Psoas muscle (tissue), 8 donors: ENCODE measurements at regions of chr6 and their contacts with region 1.

Region 1: DNA sequence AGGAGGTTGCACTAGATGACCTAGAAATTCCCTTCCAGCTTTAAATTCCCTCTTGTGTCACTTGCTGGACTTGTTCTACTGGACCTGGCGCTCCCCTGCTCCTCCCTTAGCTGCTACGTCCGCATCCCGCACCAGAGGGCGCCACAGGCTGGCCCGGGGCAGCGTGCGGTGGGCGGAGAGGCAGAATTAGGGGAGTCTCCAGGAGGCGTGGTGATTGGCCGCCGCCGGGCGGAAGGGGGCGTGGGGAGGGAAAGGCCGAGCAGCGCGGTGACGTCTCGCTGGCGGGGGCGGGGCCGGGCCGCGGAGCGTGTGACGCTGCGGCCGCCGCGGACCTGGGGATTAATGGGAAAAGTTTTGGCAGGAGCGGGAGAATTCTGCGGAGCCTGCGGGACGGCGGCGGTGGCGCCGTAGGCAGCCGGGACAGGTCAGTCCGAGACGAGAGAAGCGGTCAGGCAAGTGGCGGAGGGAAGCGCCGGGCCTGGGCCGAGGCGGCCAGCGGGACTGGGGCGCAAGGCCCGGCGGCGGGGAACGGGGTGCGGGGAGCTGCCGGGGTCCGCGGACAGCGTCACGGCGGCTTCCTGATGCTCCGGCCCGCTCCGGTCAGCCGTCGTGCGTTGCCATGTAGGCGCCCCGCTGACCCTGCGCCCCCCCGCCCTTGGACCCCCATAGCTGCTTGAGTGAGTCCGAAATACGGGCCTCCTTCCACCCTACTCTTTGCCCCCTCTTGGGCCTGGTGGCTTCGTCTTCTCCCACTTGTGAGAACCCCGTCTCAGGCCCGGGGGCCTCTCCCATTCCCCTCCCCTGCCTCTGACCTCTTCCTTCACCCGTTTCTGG is at the start of gene PPARD:
- DNase-seq: peak; percentile 99
- ATAC-seq: peak; percentile 94 to 98 (median 96)
- H3K4me3 ChIP-seq: peak within 1 kb of the TSS; percentile 99
- H3K27ac ChIP-seq: peak within 1 kb of the TSS; percentile 99
- H3K4me1 ChIP-seq: peaks cover 44% of the 10 kb centered on the region
- H3K27me3 ChIP-seq: no peaks in the 10 kb centered on the region
- CTCF ChIP-seq: peak; percentile 99
- total RNA-seq, gene PPARD: 19.4 to 47.2 (median 38.4) TPM

Region 2: DNA sequence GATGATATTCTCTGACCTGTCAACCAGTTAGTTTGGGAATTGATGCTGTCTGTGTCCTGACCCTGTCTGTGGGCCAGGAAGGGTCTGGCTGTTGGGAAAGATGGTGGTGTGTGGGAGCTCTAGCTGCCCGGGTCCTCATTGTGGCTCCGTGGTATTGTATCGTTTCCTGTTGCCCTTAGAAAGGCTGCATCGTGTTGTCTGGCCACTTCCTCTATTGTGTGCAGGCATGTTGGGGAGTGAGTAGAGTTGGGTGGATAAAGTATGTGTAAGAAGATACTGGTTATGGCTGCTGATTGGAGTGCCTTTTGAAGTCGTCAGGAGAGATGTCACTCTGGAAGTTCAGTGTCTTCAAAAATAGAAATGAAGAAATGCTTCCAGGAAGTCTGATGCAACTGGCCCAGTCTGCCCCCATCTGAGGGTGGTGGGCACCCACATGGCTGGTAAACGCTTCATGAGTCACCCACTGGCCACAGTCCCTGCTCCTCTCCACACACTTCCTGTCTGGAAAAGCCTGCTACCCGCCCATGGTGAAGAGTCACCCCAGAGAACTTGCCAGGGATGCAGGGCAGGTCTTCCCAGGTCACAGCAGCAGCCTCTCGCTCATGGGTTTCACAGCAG is 27.8 kb after region 1 on chr6:
- intact Hi-C with region 1: loop called (anchors 2 kb)
- DNase-seq: peak; percentile 92 to 96
- ATAC-seq: peak; percentile 93 to 98 (median 96)
- H3K4me3 ChIP-seq: no peak overlapping the region
- H3K27ac ChIP-seq: peak overlapping the region; percentile 83
- H3K4me1 ChIP-seq: peaks cover 54% of the 10 kb centered on the region
- H3K27me3 ChIP-seq: no peaks in the 10 kb centered on the region
- CTCF ChIP-seq: no peak

Region 3: GRCh38 chr6:35415065-35415991 is 72.9 kb after region 1 on chr6:
- intact Hi-C with region 1: loop called (anchors 1 to 2 kb)
- DNase-seq: peak; percentile 56 to 83
- ATAC-seq: peak; percentile 75 to 96 (median 90)
- H3K4me3 ChIP-seq: no peak overlapping the region
- H3K27ac ChIP-seq: peak overlapping the region; percentile 46
- H3K4me1 ChIP-seq: peaks cover 11% of the 10 kb centered on the region
- H3K27me3 ChIP-seq: no peaks in the 10 kb centered on the region
- CTCF ChIP-seq: peak; percentile 57

Region 4: GRCh38 chr6:35452186-35453090 is 110.0 kb after region 1 on chr6 and contains the start of gene FANCE:
- intact Hi-C with region 1: loop called (anchors 1 to 2 kb)
- DNase-seq: peak; percentile 95 to 97
- ATAC-seq: peak; percentile 89 to 94 (median 92)
- H3K4me3 ChIP-seq: peak within 1 kb of the TSS; percentile 78
- H3K27ac ChIP-seq: peak within 1 kb of the TSS; percentile 81
- H3K4me1 ChIP-seq: peaks cover 29% of the 10 kb centered on the region
- H3K27me3 ChIP-seq: no peaks in the 10 kb centered on the region
- CTCF ChIP-seq: no peak
- total RNA-seq, gene FANCE: 5.7 to 9.3 (median 8.1) TPM

Region 5: DNA sequence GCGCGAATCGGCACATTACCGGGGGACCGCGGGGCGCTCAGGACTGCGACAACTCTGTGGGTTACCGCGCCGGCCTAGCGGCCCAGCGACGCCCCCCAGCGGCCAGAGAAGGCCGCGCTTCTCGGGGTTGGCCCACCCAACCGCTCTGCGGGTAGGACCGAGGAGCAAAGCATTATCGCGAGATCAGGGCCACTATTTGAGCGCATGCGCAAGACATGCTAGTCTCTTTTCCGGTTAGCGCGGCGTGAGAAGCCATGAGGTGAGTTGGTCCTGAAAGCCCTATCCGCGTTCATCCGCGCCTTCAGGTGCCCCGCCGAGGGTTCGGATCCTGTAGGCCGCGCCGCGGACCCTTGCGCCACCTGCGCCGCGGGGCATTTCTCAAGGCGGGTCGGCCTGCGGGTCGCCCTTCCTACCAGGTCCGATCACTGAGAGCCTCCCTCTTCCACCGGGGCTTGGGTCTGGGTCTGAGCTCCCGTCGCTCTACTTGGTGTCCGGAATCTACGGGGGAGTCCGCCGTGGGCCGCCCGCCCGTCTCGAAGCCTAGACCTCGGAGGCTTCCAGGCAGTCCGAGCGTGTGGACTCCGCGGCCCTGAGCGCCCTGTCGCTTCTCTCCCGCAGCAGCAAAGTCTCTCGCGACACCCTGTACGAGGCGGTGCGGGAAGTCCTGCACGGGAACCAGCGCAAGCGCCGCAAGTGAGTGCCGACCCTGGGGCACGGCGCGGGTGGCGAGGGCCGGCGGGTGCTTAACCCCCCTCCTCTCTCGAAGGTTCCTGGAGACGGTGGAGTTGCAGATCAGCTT is 125.9 kb after region 1 on chr6 and contains the start of gene RPL10A:
- intact Hi-C with region 1: loop called in 1 of 2 experiments (anchors 5 kb)
- DNase-seq: peak; percentile 93 to 97
- ATAC-seq: peak; percentile 88 to 90 (median 90)
- H3K4me3 ChIP-seq: peak within 1 kb of the TSS; percentile 91
- H3K27ac ChIP-seq: peak within 1 kb of the TSS; percentile 89
- H3K4me1 ChIP-seq: peaks cover 20% of the 10 kb centered on the region
- H3K27me3 ChIP-seq: no peaks in the 10 kb centered on the region
- CTCF ChIP-seq: peak; percentile 92
- total RNA-seq, gene RPL10A: 668 to 832 (median 736) TPM